ENCODE measurements at regions of chr14 and their contacts with region 1.

Region 1: GRCh38 chr14:94136575-94137331 is 7.3 kb upstream of the IFI27L2 start:
- DNase-seq: peak; percentile 75 to 97
- H3K4me3 ChIP-seq: no peak overlapping the region
- H3K27ac ChIP-seq: no peak overlapping the region
- H3K4me1 ChIP-seq: peaks cover 5 to 17% (median 8%) of the 10 kb centered on the region in 4 experiments; a peak in 6 of 7 replicates
- H3K27me3 ChIP-seq: no peaks in the 10 kb centered on the region
- CTCF ChIP-seq: peak; percentile 94 to 99 (median 98)
- EP300 ChIP-seq: no peak
- POLR2A ChIP-seq: no peak
- RAD21 ChIP-seq: peak; percentile 91 to 95

Region 2: GRCh38 chr14:93525696-93526451 is 610.9 kb before region 1 on chr14:
- CTCF ChIA-PET with region 1: no interaction called
- POLR2A ChIA-PET with region 1: no interaction called
- DNase-seq: no peak
- H3K4me3 ChIP-seq: no peak overlapping the region
- H3K27ac ChIP-seq: no peak overlapping the region
- H3K4me1 ChIP-seq: peaks cover 0 to 2% (median 0%) of the 10 kb centered on the region in 4 experiments; a peak in 1 of 7 replicates
- H3K27me3 ChIP-seq: no peaks in the 10 kb centered on the region
- CTCF ChIP-seq: no peak
- EP300 ChIP-seq: no peak
- POLR2A ChIP-seq: no peak
- RAD21 ChIP-seq: no peak

Region 3: DNA sequence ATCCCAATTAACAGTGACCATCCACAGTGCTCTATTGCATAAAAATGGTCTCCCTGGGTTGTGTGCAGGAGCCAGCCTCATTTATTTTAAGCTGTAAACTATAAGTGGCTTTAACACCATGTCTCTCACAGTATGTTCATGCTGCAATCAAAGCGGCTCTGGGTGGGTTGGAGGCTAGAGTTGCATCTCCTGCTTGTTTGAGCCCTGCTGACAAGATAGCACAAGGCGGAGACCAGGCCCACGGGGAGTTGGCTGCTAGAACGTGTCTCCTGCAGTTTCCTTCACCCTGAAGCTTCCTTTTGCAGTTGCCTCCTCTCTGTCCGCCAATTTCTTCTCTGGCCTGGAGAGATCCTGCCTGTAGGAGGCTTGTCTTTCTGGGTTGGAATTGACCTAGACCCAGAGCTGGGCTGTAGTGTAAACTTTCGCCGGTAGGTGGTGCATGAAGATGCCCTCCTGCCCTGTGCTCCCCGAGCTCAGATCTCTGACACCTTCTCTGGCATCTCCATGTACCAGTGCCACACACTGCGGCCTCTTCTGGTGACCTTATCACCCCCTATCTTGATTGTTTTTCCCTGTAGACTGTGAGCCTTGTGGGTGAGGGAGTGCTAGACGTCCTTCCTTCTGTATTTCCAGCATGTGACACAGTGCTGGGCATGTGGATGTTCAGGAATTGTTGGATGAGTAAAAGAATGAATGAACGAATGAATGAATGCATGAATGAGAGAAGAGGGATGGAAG is 100.3 kb before region 1 on chr14:
- CTCF ChIA-PET with region 1: interaction called, 42 read pairs
- POLR2A ChIA-PET with region 1: interaction called, 3 read pairs
- DNase-seq: peak; percentile 60 to 91
- H3K4me3 ChIP-seq: no peak overlapping the region
- H3K27ac ChIP-seq: no peak overlapping the region
- H3K4me1 ChIP-seq: peaks cover 0 to 9% (median 0%) of the 10 kb centered on the region in 4 experiments; a peak in 2 of 7 replicates
- H3K27me3 ChIP-seq: no peaks in the 10 kb centered on the region
- CTCF ChIP-seq: peak; percentile 81 to 97 (median 97)
- EP300 ChIP-seq: no peak
- POLR2A ChIP-seq: no peak
- RAD21 ChIP-seq: peak; percentile 64 to 72

Region 4: GRCh38 chr14:94066089-94066676 is 70.6 kb before region 1 on chr14:
- CTCF ChIA-PET with region 1: interaction called, 148 read pairs
- POLR2A ChIA-PET with region 1: no interaction called
- DNase-seq: no peak
- H3K4me3 ChIP-seq: no peak overlapping the region
- H3K27ac ChIP-seq: no peak overlapping the region; the same call in 1 of the 2 replicates
- H3K4me1 ChIP-seq: peaks cover 0 to 7% (median 3%) of the 10 kb centered on the region in 4 experiments; a peak in 3 of 7 replicates
- H3K27me3 ChIP-seq: no peaks in the 10 kb centered on the region
- CTCF ChIP-seq: peak in 1 of 3 experiments; percentile 24; a peak in 1 of 4 replicates
- EP300 ChIP-seq: no peak
- POLR2A ChIP-seq: no peak
- RAD21 ChIP-seq: no peak

Region 5: DNA sequence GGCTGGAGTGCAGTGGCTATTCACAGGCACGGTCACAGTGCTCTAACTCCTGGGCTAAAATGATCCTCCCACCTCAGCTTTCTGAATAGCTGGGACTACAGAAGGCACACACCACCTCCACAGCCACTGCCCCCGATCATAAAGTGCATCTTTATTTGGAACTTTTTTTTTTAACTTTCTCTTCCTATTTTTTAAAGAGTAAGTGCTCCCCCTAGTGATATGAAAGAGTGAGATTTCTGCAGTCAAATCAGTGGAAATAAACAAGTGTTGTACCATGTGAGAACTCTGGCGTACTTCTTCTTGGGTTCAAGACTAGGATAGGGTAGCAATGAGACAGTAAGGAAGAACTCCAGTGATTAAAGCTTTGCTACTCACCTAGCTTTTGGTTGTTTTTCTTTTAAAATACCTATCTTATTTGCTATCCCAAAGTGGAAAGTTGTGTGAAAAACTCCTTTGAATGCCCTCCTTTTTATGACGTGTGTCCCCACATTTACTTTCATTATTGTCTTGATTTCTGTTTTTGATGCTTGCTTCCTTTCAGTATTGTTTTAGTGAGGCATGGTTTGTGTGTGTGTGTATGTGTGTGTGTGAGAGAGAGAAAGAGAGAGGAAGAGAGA is 44.0 kb after region 1 on chr14:
- CTCF ChIA-PET with region 1: interaction called, 31 read pairs
- POLR2A ChIA-PET with region 1: interaction called, 3 read pairs
- DNase-seq: no peak
- H3K4me3 ChIP-seq: no peak overlapping the region
- H3K27ac ChIP-seq: no peak overlapping the region
- H3K4me1 ChIP-seq: peaks cover 0 to 6% (median 3%) of the 10 kb centered on the region in 4 experiments; a peak in 5 of 7 replicates
- H3K27me3 ChIP-seq: peaks cover 0 to 2% (median 0%) of the 10 kb centered on the region in 4 experiments; a peak in 1 of 7 replicates
- CTCF ChIP-seq: peak in 2 of 3 experiments; percentile 35; a peak in 2 of 4 replicates
- EP300 ChIP-seq: no peak
- POLR2A ChIP-seq: no peak
- RAD21 ChIP-seq: peak; percentile 55 to 59

Region 6: GRCh38 chr14:94523265-94523664 is 386.5 kb after region 1 on chr14:
- CTCF ChIA-PET with region 1: no interaction called
- POLR2A ChIA-PET with region 1: no interaction called
- DNase-seq: no peak
- H3K4me3 ChIP-seq: no peak overlapping the region
- H3K27ac ChIP-seq: no peak overlapping the region
- H3K4me1 ChIP-seq: no peaks in the 10 kb centered on the region; a peak in 1 of 7 replicates
- H3K27me3 ChIP-seq: no peaks in the 10 kb centered on the region
- CTCF ChIP-seq: no peak
- EP300 ChIP-seq: no peak
- POLR2A ChIP-seq: no peak
- RAD21 ChIP-seq: no peak

Measured in H1 (cell line).